Activated CD8-positive, alpha-beta memory T cell treated with anti-CD3 and anti-CD28 coated beads, Interleukin-2, amount 10 ng/mL, durations not matched to agents 7 days and 5 days (primary cell): ENCODE measurements at regions of chr1 and their contacts with region 1.

Region 1: DNA sequence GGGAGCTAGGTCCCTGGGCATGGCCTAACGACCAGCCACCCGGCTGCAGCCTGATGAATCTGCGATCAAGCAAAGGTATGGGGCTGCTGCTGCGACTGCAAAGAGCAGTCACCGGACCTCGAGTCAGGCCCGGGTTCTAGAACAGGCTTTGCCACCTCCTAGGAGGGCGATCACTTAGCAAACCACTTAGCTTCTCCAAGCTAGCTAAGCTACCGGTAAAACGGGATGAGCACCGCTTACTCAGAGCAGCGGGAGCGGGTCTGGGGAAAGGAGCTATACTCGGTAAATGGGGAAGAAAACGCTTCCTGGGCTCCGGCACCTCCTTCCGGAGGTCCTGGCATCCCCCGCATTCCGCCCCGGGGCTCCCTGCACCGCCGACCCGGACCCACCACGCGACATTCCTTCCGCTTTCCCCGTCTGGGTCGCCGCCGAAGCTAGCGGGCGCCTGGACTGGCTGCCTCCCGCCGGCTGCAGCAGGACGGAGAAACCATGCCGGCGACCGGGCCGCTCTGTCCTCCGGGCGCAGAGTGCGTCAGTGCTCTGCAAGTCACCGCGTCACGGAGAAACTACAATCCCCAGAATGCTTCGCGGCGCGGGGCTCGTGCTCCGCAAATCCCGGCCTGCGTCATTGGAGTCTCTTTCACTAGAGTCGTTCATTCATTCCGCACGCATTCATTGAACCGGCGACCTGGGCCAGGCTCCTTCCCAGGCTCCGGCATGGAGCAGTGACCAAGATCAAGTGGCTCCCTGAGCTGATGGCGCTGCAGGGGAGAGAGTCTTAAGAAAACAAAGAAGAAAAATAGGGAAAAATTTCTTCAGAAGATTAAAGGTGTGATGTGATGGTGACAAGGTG is at the start of gene LSM10:
- DNase-seq: peak; percentile 95
- ATAC-seq: peak; percentile 89
- H3K4me3 Mint-ChIP-seq: peak within 1 kb of the TSS; percentile 90
- H3K27ac Mint-ChIP-seq: peak within 1 kb of the TSS; percentile 96
- H3K4me1 Mint-ChIP-seq: peaks cover 52% of the 10 kb centered on the region
- H3K27me3 Mint-ChIP-seq: no peaks in the 10 kb centered on the region
- total RNA-seq, gene LSM10: 48.9 to 63.8 TPM

Region 2: DNA sequence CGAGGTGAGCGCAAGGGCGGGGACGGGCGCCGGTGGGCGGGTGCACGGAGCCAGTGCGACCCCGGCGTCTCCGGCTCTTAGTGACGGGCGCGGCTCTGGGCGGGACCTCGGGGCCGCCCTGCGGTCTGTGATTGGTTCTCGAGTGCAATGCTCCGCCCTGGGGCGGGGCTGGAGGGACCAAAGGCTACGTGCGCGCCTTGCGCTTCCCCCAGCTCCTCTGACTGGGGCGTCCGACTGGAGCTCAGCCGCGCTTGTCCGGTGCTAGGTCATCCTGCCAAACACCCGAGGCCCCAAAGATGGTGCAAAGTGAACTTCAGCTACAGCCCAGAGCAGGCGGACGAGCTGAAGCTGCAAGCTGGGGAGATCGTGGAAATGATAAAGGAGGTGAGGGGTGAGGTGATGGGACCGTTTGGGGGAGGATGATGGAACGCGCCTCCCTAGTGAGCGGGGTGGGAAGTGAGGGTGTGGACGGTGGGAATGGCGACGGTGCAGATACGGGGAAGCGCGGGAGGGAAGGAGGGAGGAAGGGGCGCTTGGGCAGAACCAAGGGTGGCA is 90.6 kb before region 1 on chr1:
- CTCF ChIA-PET with region 1: interaction called, 13 read pairs
- DNase-seq: peak; percentile 95
- ATAC-seq: peak; percentile 99
- H3K4me3 Mint-ChIP-seq: peak overlapping the region; percentile 89
- H3K27ac Mint-ChIP-seq: peak overlapping the region; percentile 87
- H3K4me1 Mint-ChIP-seq: peaks cover 32% of the 10 kb centered on the region
- H3K27me3 Mint-ChIP-seq: no peaks in the 10 kb centered on the region

Region 3: DNA sequence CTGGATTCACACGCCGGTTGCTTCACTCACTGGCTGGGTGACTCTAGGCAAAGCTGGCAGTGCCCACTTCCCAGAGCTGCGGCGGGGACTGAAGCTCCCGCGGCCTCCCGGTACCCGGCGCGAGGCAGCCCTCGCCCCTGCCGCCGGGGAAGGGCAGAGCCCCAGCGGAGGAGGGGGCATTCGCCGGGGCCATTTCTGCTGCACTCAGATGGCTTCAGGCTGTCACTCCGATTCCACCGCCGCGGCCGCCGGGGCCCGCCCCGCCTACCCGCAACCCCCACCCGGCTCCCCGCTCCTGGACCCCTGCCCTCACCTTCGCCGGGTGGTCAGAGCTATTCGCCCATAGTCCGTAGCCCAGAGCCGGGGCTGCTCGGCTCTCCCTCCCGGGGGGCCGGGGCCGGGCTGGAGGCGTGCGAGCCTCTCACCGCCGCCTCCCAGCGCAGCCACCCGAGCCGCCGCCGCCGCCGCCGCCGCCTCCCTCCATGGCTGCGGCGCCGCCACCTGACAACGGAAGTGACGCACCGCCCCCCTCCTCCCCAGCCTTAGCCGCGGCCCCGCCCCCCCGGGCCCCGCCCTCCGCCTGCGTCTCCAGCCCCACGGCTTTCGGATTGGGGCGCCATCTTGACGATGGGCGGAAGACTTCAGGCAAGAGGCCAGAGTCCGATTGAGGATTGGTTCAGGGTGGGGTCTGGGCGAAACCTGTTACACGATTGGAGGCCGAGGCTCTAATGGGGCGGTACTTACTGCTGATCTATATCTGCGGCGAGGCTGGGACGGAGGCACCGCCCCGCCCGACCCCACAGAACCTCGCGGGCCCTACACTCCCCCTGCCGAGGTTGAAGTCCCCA is 12.0 kb before region 1 on chr1 and contains the start of gene STK40:
- CTCF ChIA-PET with region 1: interaction called, 49 read pairs
- DNase-seq: peak; percentile 99
- ATAC-seq: peak; percentile 90
- H3K4me3 Mint-ChIP-seq: peak within 1 kb of the TSS; percentile 93
- H3K27ac Mint-ChIP-seq: peak within 1 kb of the TSS; percentile 98
- H3K4me1 Mint-ChIP-seq: peaks cover 50% of the 10 kb centered on the region
- H3K27me3 Mint-ChIP-seq: no peaks in the 10 kb centered on the region
- total RNA-seq, gene STK40: 67.0 to 73.2 TPM

Region 4: GRCh38 chr1:36411674-36412520 is 14.3 kb after region 1 on chr1:
- CTCF ChIA-PET with region 1: interaction called, 11 read pairs
- DNase-seq: peak; percentile 85
- ATAC-seq: peak; percentile 98
- H3K4me3 Mint-ChIP-seq: peak overlapping the region; percentile 23
- H3K27ac Mint-ChIP-seq: peak overlapping the region; percentile 94
- H3K4me1 Mint-ChIP-seq: peaks cover 24% of the 10 kb centered on the region
- H3K27me3 Mint-ChIP-seq: no peaks in the 10 kb centered on the region

Region 5: GRCh38 chr1:36463803-36464604 is 66.4 kb after region 1 on chr1 and contains the start of gene MRPS15:
- CTCF ChIA-PET with region 1: no interaction called
- DNase-seq: peak; percentile 97
- ATAC-seq: peak; percentile 98
- H3K4me3 Mint-ChIP-seq: peak within 1 kb of the TSS; percentile 99
- H3K27ac Mint-ChIP-seq: peak within 1 kb of the TSS; percentile 98
- H3K4me1 Mint-ChIP-seq: peaks cover 57% of the 10 kb centered on the region
- H3K27me3 Mint-ChIP-seq: no peaks in the 10 kb centered on the region
- total RNA-seq, gene MRPS15: 112 to 115 TPM

Region 6: DNA sequence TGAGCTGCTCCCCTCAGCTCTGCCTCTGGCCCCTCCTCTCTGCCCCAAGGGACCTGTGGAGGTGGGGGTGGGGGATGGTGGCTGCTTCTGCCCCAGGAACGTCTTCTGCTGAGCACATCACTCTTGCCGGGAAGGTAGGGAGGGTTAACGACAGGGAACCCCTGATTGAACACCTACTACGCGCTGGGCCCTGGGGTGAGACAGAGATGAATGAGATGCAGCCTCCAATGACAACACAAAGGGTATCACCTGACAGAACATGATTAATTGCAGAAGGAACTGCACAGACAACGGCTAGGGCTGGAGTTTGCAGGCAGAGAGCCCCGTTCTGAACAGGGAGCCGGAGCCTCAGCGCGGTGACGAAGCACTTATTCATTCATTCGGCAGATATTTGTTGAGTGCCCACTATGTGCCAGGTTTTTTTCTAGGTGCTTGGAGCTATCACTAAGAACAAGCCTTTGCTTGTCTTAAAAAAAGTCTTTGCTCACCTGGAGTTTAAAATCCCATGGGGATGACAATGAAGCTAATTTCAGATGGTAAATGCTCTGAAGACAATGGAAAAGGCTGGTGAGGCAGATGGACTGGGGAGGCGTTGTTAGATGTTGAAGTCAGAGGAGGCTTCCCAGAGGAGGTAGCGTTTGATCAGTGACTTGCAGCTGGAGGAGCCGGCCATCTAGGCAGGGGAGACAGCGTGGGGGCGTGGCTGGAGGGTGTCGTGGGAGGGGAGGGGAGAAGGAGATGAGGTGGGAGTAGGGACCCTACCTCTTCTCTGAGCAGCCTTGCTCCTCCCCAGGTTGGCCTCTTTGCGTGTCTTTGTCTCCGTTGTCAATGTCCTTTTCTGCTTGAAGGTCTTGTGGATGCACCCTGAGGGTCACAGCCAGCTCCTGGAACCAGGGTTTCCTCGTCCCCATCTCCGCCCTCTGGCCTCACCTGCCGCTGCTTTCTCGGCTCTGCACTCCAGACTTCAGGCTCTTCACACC is 188.3 kb after region 1 on chr1:
- CTCF ChIA-PET with region 1: no interaction called
- DNase-seq: no peak
- ATAC-seq: no peak
- H3K4me3 Mint-ChIP-seq: no peak overlapping the region
- H3K27ac Mint-ChIP-seq: no peak overlapping the region
- H3K4me1 Mint-ChIP-seq: no peaks in the 10 kb centered on the region
- H3K27me3 Mint-ChIP-seq: peaks cover 58% of the 10 kb centered on the region